Caco-2 (cell line): ENCODE measurements at regions of chr11 and their contacts with region 1.

Region 1: DNA sequence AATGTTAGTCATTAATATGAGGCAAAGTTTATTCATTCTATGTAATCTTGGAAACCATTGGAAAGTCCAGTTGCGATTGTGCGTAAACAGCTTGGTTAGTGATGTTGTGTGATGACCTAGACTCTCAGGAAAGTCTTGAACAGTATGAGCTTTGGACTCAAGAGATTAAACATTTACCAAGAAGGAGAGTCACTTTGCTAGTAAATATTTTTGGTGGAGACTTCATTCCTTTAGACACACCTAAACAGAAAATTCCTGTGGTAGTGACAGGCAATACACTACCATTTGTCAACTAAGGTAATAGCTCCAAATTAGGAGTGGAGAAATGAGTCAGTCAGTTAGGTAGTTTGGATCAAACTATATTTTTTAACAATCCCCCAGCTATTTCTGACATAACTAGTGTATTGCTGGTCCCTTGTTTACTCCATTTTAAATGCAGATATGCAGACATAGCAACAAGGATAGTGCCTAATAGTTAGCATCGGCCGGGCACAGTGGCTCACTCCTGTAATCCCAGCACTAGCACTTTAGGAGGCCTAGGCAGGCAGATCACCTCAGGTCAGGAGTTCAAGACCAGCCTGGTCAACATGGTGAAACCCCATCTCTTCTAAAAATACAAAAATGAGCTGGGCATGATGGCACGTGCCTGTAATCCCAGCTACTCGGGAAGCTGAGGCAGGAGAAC is 89.3 kb downstream of the ARHGAP42 start:
- DNase-seq: peak; percentile 62 to 79
- H3K4me3 ChIP-seq: no peak overlapping the region
- H3K4me3 Mint-ChIP-seq: peak overlapping the region; percentile 39
- H3K27ac Mint-ChIP-seq: peak overlapping the region; percentile 97
- H3K4me1 ChIP-seq: peaks cover 49% of the 10 kb centered on the region
- H3K4me1 Mint-ChIP-seq: peaks cover 25% of the 10 kb centered on the region
- H3K27me3 ChIP-seq: no peaks in the 10 kb centered on the region
- H3K27me3 Mint-ChIP-seq: no peaks in the 10 kb centered on the region
- CTCF ChIP-seq: no peak

Region 2: DNA sequence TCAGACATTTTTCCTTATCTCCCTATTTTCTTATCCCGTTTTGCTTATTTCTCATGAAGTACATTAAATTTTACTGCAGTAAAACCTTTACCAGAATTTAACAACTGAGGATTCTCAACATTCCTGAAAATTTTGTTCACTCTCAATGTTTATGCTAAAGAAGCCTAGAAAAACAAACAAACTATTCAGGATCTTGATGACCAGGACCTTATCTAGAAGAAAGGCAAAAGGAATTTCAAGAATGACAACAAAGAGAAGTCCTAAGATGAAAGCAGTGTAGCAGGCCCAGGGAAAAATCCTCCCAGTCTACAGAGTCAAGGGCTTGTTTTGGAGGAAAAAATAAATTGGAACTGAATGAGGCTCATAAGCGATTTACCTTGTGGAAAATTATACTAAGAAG is 372.5 kb before region 1 on chr11:
- CTCF ChIA-PET with region 1: no interaction called
- POLR2A ChIA-PET with region 1: no interaction called
- intact Hi-C with region 1: loop called (anchors 5 kb)
- DNase-seq: peak; percentile 69 to 73
- H3K4me3 ChIP-seq: no peak overlapping the region
- H3K4me3 Mint-ChIP-seq: peak overlapping the region; percentile 39
- H3K27ac Mint-ChIP-seq: peak overlapping the region; percentile 87
- H3K4me1 ChIP-seq: peaks cover 74% of the 10 kb centered on the region
- H3K4me1 Mint-ChIP-seq: peaks cover 56% of the 10 kb centered on the region
- H3K27me3 ChIP-seq: no peaks in the 10 kb centered on the region
- H3K27me3 Mint-ChIP-seq: no peaks in the 10 kb centered on the region
- CTCF ChIP-seq: no peak

Region 3: GRCh38 chr11:100687630-100688395 is 88.5 kb before region 1 on chr11:
- CTCF ChIA-PET with region 1: interaction called, 19 read pairs
- POLR2A ChIA-PET with region 1: interaction called, 6 read pairs
- intact Hi-C with region 1: loop called (anchors 1 kb)
- DNase-seq: peak; percentile 78
- H3K4me3 ChIP-seq: peak overlapping the region; percentile 85
- H3K4me3 Mint-ChIP-seq: peak overlapping the region; percentile 100
- H3K27ac Mint-ChIP-seq: peak overlapping the region; percentile 89
- H3K4me1 ChIP-seq: peaks cover 9% of the 10 kb centered on the region
- H3K4me1 Mint-ChIP-seq: peaks cover 21% of the 10 kb centered on the region
- H3K27me3 ChIP-seq: no peaks in the 10 kb centered on the region
- H3K27me3 Mint-ChIP-seq: no peaks in the 10 kb centered on the region
- CTCF ChIP-seq: peak; percentile 92

Region 4: GRCh38 chr11:100753172-100753543 is 23.2 kb before region 1 on chr11:
- CTCF ChIA-PET with region 1: interaction called, 5 read pairs
- POLR2A ChIA-PET with region 1: interaction called, 3 read pairs
- intact Hi-C with region 1: loop called (anchors 1 kb)
- DNase-seq: peak; percentile 85 to 89
- H3K4me3 ChIP-seq: no peak overlapping the region
- H3K4me3 Mint-ChIP-seq: no peak overlapping the region
- H3K27ac Mint-ChIP-seq: peak overlapping the region; percentile 81
- H3K4me1 ChIP-seq: peaks cover 33% of the 10 kb centered on the region
- H3K4me1 Mint-ChIP-seq: peaks cover 16% of the 10 kb centered on the region
- H3K27me3 ChIP-seq: no peaks in the 10 kb centered on the region
- H3K27me3 Mint-ChIP-seq: no peaks in the 10 kb centered on the region
- CTCF ChIP-seq: peak in 1 of 2 experiments; percentile 35

Region 5: GRCh38 chr11:100827934-100828661 is 51.7 kb after region 1 on chr11:
- CTCF ChIA-PET with region 1: interaction called, 25 read pairs
- POLR2A ChIA-PET with region 1: no interaction called
- intact Hi-C with region 1: loop called (anchors 1 kb)
- DNase-seq: peak; percentile 82 to 85
- H3K4me3 ChIP-seq: no peak overlapping the region
- H3K4me3 Mint-ChIP-seq: no peak overlapping the region
- H3K27ac Mint-ChIP-seq: peak overlapping the region; percentile 73
- H3K4me1 ChIP-seq: peaks cover 36% of the 10 kb centered on the region
- H3K4me1 Mint-ChIP-seq: peaks cover 29% of the 10 kb centered on the region
- H3K27me3 ChIP-seq: no peaks in the 10 kb centered on the region
- H3K27me3 Mint-ChIP-seq: no peaks in the 10 kb centered on the region
- CTCF ChIP-seq: peak; percentile 79 to 90

Region 6: GRCh38 chr11:100855466-100856067 is 79.2 kb after region 1 on chr11:
- CTCF ChIA-PET with region 1: interaction called, 5 read pairs
- POLR2A ChIA-PET with region 1: interaction called, 4 read pairs
- intact Hi-C with region 1: loop called (anchors 2 kb)
- DNase-seq: peak in 1 of 2 experiments; percentile 65
- H3K4me3 ChIP-seq: no peak overlapping the region
- H3K4me3 Mint-ChIP-seq: no peak overlapping the region
- H3K27ac Mint-ChIP-seq: no peak overlapping the region
- H3K4me1 ChIP-seq: peaks cover 32% of the 10 kb centered on the region
- H3K4me1 Mint-ChIP-seq: peaks cover 27% of the 10 kb centered on the region
- H3K27me3 ChIP-seq: no peaks in the 10 kb centered on the region
- H3K27me3 Mint-ChIP-seq: no peaks in the 10 kb centered on the region
- CTCF ChIP-seq: peak; percentile 64 to 81

Region 7: DNA sequence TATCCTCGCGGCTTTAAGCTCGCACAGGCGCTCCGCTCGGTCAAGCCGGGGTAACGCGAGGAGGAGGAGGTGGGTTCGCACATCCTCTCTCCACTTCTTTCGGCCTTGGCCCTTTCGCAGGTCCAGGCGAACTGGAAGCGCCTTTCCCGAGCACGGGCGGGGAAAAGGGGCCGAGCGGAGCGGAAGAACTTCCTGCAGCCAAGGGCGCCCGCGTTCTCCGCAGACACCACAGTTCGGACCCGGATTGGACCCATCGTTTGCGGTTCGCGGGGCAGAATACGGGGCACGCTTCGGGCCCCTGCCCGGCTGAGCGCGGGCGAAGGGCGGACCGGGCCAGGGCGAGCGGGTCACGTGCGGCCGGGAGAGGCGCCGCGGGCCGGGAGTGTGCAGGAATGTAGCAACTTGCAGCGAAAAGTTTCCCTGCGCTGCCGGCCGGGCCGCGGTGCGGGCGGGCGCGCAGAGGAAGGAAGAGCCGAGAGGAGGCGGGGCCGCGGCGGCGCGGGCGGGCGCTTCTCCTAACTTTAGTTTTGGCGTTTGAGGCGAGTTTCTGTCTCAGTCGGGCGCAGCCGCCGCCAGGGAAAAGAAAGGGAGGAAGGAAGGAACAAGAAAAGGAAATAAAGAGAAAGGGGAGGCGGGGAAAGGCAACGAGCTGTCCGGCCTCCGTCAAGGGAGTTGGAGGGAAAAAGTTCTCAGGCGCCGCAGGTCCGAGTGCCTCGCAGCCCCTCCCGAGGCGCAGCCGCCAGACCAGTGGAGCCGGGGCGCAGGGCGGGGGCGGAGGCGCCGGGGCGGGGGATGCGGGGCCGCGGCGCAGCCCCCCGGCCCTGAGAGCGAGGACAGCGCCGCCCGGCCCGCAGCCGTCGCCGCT is 1333.8 kb after region 1 on chr11 and contains the start of gene YAP1:
- CTCF ChIA-PET with region 1: no interaction called
- POLR2A ChIA-PET with region 1: no interaction called
- intact Hi-C with region 1: loop called (anchors 5 kb)
- DNase-seq: peak; percentile 97 to 99
- H3K4me3 ChIP-seq: peak within 1 kb of the TSS; percentile 96
- H3K4me3 Mint-ChIP-seq: peak within 1 kb of the TSS; percentile 91
- H3K27ac Mint-ChIP-seq: peak within 1 kb of the TSS; percentile 98
- H3K4me1 ChIP-seq: peaks cover 20% of the 10 kb centered on the region
- H3K4me1 Mint-ChIP-seq: peaks cover 16% of the 10 kb centered on the region
- H3K27me3 ChIP-seq: no peaks in the 10 kb centered on the region
- H3K27me3 Mint-ChIP-seq: no peaks in the 10 kb centered on the region
- CTCF ChIP-seq: no peak
- total RNA-seq, gene YAP1: 207 and 227 TPM in 2 replicates